PC-3 (cell line): ENCODE measurements at regions of chr7 and their contacts with region 1.

Region 1: DNA sequence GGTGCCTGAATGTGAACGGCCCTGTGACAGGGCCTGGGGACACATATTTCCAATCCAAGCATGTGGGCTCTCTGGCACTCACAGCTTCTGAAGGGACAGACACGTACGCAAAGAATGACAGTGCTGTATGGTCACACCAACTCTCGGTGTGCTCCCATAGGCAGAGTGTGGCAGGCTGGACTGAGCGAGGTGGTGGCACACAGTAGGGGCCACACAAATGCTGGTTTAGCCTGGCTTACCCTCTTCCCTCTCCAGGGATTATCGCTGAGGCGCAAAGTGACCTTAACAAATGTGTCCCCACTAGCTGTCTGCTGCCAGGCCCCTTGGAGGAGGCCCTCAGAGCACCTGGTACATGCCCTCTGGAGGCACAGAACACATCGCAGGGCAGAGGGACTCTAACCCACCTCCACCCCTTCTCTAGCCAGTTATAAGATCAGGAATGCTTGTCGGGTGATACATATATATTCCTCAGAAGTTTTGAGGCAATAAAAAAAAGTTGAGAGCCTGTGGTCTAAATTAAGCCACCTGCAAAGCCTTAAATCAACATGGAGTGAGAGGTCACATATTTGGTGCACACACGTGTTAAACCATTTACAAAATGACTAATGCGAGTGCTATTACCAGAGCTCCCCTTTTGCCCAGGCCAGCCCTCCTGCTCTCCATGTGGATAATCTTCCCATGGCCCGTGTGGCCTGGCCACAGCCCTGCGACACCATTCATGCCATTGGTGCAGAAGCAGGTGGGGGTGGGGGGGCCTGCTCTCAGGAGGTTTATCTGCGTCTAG is 262.8 kb upstream of the GRB10 start:
- DNase-seq: peak; percentile 97
- ATAC-seq: peak; percentile 95
- H3K4me3 ChIP-seq: no peak overlapping the region
- H3K27ac ChIP-seq: peak overlapping the region; percentile 85
- H3K4me1 ChIP-seq: peaks cover 27% of the 10 kb centered on the region
- H3K27me3 ChIP-seq: no peaks in the 10 kb centered on the region
- CTCF ChIP-seq: no peak

Region 2: GRCh38 chr7:50404392-50404791 is 641.1 kb before region 1 on chr7:
- CTCF ChIA-PET with region 1: no interaction called
- POLR2A ChIA-PET with region 1: no interaction called
- intact Hi-C with region 1: no loop called
- DNase-seq: no peak
- ATAC-seq: peak; percentile 50
- H3K4me3 ChIP-seq: no peak overlapping the region
- H3K27ac ChIP-seq: no peak overlapping the region
- H3K4me1 ChIP-seq: no peaks in the 10 kb centered on the region
- H3K27me3 ChIP-seq: peaks cover 84% of the 10 kb centered on the region
- CTCF ChIP-seq: peak; percentile 28; the same call in 1 of the 2 replicates

Region 3: GRCh38 chr7:50793115-50793946 is 252.2 kb before region 1 on chr7:
- CTCF ChIA-PET with region 1: no interaction called
- POLR2A ChIA-PET with region 1: no interaction called
- intact Hi-C with region 1: loop called (anchors 5 kb)
- DNase-seq: peak; percentile 61
- ATAC-seq: peak; percentile 67
- H3K4me3 ChIP-seq: peak overlapping the region; percentile 65
- H3K27ac ChIP-seq: peak overlapping the region; percentile 36; the same call in 1 of the 2 replicates
- H3K4me1 ChIP-seq: peaks cover 15% of the 10 kb centered on the region
- H3K27me3 ChIP-seq: no peaks in the 10 kb centered on the region
- CTCF ChIP-seq: no peak

Region 4: DNA sequence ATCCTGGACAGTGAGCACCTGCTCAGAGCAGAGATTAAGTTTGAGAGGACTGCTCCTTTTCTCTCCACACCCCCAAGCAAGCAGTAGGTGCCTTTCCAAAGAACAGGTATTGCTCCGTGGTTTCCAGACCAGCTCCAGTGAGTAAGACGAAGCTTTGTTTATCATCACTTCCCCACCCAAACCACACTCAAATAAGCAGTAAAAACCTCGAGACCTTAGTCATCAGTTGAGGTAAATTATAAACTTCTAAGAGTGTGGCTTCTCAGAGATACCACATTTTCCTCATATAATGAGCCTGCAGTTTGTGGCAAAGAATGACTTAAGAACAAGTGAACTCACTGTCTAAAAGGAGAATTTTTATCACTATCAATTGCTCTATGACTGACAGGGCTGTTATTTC is 212.8 kb before region 1 on chr7:
- CTCF ChIA-PET with region 1: no interaction called
- POLR2A ChIA-PET with region 1: interaction called, 5 read pairs
- intact Hi-C with region 1: loop called (anchors 2 kb)
- DNase-seq: peak; percentile 97
- ATAC-seq: peak; percentile 92
- H3K4me3 ChIP-seq: no peak overlapping the region
- H3K27ac ChIP-seq: peak overlapping the region; percentile 98
- H3K4me1 ChIP-seq: peaks cover 60% of the 10 kb centered on the region
- H3K27me3 ChIP-seq: no peaks in the 10 kb centered on the region
- CTCF ChIP-seq: no peak

Region 5: GRCh38 chr7:50869108-50869725 is 176.3 kb before region 1 on chr7:
- CTCF ChIA-PET with region 1: no interaction called
- POLR2A ChIA-PET with region 1: no interaction called
- intact Hi-C with region 1: loop called (anchors 1 kb)
- DNase-seq: peak; percentile 87
- ATAC-seq: peak; percentile 93
- H3K4me3 ChIP-seq: peak overlapping the region; percentile 27; the same call in 1 of the 2 replicates
- H3K27ac ChIP-seq: peak overlapping the region; percentile 85
- H3K4me1 ChIP-seq: peaks cover 30% of the 10 kb centered on the region
- H3K27me3 ChIP-seq: no peaks in the 10 kb centered on the region
- CTCF ChIP-seq: no peak

Region 6: GRCh38 chr7:50914460-50914859 is 131.1 kb before region 1 on chr7:
- CTCF ChIA-PET with region 1: interaction called, 3 read pairs
- POLR2A ChIA-PET with region 1: no interaction called
- intact Hi-C with region 1: loop called (anchors 5 kb)
- DNase-seq: peak; percentile 73
- ATAC-seq: peak; percentile 88
- H3K4me3 ChIP-seq: no peak overlapping the region
- H3K27ac ChIP-seq: peak overlapping the region; percentile 84
- H3K4me1 ChIP-seq: peaks cover 22% of the 10 kb centered on the region
- H3K27me3 ChIP-seq: no peaks in the 10 kb centered on the region
- CTCF ChIP-seq: no peak

Region 7: DNA sequence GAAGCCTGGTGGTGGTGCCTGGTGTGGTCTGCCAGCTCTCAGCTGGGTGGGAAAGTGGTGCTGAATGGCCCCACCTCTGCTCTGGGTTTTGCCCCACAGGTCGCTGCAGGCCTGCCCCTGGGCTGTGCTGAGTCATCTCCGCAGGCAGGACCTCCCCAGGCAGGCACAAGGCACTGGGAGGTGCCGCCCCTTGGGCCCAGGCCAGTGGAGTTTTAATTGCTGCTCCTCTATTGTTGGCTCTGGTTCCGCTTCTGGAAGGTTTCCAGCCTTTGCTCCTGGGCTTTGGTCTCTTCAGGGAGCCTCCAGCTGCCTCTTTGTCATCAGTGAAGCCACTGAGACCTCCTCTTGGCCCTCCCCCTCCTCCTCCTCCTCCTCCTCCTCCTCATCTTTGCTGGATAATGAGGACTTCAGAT is 82.5 kb before region 1 on chr7:
- CTCF ChIA-PET with region 1: interaction called, 4 read pairs
- POLR2A ChIA-PET with region 1: interaction called, 14 read pairs
- intact Hi-C with region 1: loop called (anchors 5 kb)
- DNase-seq: peak; percentile 97
- ATAC-seq: peak; percentile 97
- H3K4me3 ChIP-seq: peak overlapping the region; percentile 35; the same call in 1 of the 2 replicates
- H3K27ac ChIP-seq: peak overlapping the region; percentile 88
- H3K4me1 ChIP-seq: peaks cover 19% of the 10 kb centered on the region
- H3K27me3 ChIP-seq: no peaks in the 10 kb centered on the region
- CTCF ChIP-seq: no peak

Region 8: DNA sequence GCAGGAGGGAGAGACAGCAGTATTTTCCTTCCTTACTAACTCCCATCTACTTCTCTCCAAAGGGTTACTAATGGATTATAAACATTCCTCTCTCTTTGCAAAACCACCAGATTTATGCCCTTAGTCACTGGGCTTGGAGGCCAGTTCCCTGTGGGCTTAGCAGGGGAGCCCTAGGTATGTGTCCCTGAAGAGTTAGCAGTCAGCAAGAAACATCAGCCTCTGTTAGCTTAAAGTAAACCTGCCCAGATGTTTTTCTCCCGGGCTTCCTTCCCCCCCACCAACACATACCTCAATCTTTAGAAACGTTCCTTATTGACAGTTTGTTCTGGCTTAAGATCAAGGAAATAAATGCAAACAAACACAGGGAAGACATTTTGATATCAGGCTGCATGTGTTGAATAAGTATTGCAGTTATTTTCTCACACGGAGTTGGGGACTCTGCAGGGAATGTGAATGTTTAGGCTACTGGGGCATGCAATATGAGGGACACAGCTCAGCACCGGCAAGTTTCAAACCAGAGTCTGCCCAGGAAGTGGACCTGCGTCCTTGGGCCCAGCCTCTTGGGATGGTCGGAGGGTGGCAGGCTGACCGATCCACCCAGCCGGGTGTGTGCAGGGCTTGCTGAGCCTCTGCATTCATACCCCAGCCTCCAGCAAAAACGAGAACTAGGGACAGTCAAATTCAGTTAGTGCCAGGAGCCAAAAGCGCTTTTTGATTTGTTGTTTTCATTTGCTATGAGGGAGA is 10.8 kb before region 1 on chr7:
- CTCF ChIA-PET with region 1: no interaction called
- POLR2A ChIA-PET with region 1: interaction called, 4 read pairs
- intact Hi-C with region 1: loop called (anchors 2 kb)
- DNase-seq: peak; percentile 71
- ATAC-seq: peak; percentile 77
- H3K4me3 ChIP-seq: no peak overlapping the region
- H3K27ac ChIP-seq: peak overlapping the region; percentile 21; the same call in 1 of the 2 replicates
- H3K4me1 ChIP-seq: peaks cover 32% of the 10 kb centered on the region
- H3K27me3 ChIP-seq: no peaks in the 10 kb centered on the region
- CTCF ChIP-seq: no peak